Activated CD8-positive, alpha-beta T cell treated with anti-CD3 and anti-CD28 coated beads for 36 hours (primary cell): ENCODE measurements at regions of chr3 and their contacts with region 1.

Region 1: DNA sequence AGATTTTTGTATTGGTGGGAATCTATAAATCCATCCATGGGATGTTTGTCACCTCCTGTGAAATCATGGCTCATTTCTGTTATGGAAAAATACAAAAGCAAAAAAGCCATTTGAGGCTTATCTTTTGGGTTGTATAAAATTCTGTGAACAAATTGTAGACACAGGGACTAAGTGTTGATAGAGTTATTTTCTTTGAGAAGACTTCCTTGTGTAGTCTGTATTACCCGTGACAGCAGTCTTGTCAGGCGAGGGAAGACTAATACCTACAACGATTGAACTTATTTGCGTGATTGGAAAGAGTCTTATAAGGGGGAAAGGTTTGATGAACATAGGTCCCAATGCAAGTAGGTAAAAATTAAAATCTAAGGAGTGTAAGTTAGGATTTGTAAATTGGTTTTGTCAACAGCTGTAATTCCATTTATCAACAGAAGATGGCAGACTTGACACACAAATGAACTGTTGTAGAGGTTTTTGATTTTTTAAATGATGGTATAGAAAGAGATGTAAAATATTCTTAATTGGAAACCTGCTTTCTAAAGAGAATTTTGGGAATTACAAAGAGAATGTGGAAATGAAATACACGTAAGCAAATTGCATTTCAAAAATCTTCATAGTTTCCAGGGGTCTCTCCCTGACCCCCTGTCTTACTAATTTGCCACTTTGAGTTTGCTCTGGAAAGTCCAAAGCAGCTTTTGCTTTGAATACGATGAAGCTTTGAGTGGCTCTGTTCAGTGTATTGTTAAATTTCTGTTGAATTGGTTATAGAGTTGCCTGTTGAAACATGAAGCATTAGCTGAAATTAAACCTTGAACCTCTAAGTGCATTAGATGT is 33.2 kb downstream of the SLC25A26 start:
- DNase-seq: no peak
- ATAC-seq: no peak
- H3K4me3 Mint-ChIP-seq: no peak overlapping the region
- H3K27ac Mint-ChIP-seq: no peak overlapping the region
- H3K4me1 Mint-ChIP-seq: peaks cover 2% of the 10 kb centered on the region
- H3K27me3 Mint-ChIP-seq: no peaks in the 10 kb centered on the region
- CTCF ChIP-seq: peak; percentile 91

Region 2: GRCh38 chr3:65793495-65794199 is 460.4 kb before region 1 on chr3:
- CTCF ChIA-PET with region 1: no interaction called
- POLR2A ChIA-PET with region 1: no interaction called
- intact Hi-C with region 1: no loop called
- DNase-seq: no peak
- ATAC-seq: no peak
- H3K4me3 Mint-ChIP-seq: no peak overlapping the region
- H3K27ac Mint-ChIP-seq: no peak overlapping the region
- H3K4me1 Mint-ChIP-seq: no peaks in the 10 kb centered on the region
- H3K27me3 Mint-ChIP-seq: no peaks in the 10 kb centered on the region
- CTCF ChIP-seq: no peak

Region 3: DNA sequence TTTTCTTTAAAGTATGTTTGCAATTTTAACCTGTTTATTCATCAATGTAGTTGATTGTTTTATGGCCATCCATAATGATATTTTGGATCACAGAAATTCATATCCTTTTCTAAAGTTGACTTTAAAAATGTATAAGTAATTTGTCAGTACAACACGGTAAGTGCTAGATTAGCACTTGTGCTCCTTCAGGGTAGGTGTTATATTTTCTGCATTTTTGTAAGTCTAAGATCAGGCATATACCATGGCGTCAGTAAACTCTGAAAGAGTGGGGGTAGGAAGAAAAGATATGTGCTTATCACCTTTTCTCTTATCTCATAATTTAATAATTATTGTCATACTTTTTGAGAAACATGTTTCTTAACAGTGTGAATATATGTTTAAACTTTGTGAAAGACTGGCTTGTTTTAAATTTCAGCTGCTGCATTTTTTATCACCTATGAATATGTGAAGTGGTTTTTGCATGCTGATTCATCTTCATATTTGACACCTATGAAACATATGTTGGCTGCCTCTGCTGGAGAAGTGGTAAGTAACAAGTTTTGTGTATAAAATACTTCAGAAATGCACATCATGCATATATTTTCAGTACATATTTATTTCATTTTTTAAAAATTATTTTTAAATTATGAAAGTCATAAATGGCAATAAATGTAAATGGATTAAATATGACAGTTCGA is 11.1 kb before region 1 on chr3:
- CTCF ChIA-PET with region 1: interaction called, 29 read pairs
- POLR2A ChIA-PET with region 1: interaction called, 3 read pairs
- intact Hi-C with region 1: no loop called
- DNase-seq: no peak
- ATAC-seq: no peak
- H3K4me3 Mint-ChIP-seq: no peak overlapping the region
- H3K27ac Mint-ChIP-seq: no peak overlapping the region
- H3K4me1 Mint-ChIP-seq: peaks cover 21% of the 10 kb centered on the region
- H3K27me3 Mint-ChIP-seq: no peaks in the 10 kb centered on the region
- CTCF ChIP-seq: no peak

Region 4: DNA sequence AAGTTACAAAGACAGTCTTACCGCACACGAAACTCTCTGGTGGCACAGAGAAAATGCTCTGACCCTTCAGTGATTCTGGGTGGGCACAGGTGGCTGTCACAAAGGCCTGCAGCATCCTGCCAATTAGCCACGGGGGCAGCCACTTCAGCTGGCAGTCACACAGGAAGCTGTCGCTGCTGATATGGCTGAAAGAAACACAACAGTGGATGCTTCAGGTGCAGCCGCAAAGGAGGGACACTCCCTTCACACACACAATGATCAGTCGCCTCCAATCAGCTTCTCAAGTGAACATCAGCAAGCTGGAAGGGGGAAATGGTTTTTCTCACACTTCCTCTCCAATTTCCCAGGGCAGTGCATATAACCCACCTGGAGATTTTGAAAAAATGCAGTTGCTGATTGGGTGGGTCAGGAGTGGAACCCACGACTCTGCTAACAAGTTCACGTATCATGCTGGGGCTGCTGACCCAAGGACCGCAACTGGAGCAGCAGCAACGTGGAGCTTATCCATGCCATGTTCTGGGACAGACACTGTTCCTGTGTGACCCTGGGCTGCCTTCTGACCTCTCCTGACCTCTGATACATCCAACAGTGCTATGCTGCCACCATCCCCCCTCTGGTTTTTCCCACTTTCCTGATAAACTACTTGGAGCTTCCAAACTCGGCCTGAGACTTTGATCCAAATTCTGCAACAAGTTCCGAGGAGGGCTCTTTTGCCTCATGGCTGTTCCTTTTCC is 140.2 kb after region 1 on chr3:
- CTCF ChIA-PET with region 1: interaction called, 10 read pairs
- POLR2A ChIA-PET with region 1: no interaction called
- intact Hi-C with region 1: no loop called
- DNase-seq: peak; percentile 76
- ATAC-seq: peak; percentile 98
- H3K4me3 Mint-ChIP-seq: peak overlapping the region; percentile 59
- H3K27ac Mint-ChIP-seq: peak overlapping the region; percentile 83
- H3K4me1 Mint-ChIP-seq: peaks cover 45% of the 10 kb centered on the region
- H3K27me3 Mint-ChIP-seq: no peaks in the 10 kb centered on the region
- CTCF ChIP-seq: no peak

Region 5: GRCh38 chr3:66816090-66816761 is 562.2 kb after region 1 on chr3:
- CTCF ChIA-PET with region 1: interaction called, 34 read pairs
- POLR2A ChIA-PET with region 1: no interaction called
- intact Hi-C with region 1: no loop called
- DNase-seq: no peak
- ATAC-seq: peak; percentile 61
- H3K4me3 Mint-ChIP-seq: no peak overlapping the region
- H3K27ac Mint-ChIP-seq: no peak overlapping the region
- H3K4me1 Mint-ChIP-seq: no peaks in the 10 kb centered on the region
- H3K27me3 Mint-ChIP-seq: no peaks in the 10 kb centered on the region
- CTCF ChIP-seq: peak; percentile 79